ENCODE measurements at regions of chr1 and their contacts with region 1.

Region 1: DNA sequence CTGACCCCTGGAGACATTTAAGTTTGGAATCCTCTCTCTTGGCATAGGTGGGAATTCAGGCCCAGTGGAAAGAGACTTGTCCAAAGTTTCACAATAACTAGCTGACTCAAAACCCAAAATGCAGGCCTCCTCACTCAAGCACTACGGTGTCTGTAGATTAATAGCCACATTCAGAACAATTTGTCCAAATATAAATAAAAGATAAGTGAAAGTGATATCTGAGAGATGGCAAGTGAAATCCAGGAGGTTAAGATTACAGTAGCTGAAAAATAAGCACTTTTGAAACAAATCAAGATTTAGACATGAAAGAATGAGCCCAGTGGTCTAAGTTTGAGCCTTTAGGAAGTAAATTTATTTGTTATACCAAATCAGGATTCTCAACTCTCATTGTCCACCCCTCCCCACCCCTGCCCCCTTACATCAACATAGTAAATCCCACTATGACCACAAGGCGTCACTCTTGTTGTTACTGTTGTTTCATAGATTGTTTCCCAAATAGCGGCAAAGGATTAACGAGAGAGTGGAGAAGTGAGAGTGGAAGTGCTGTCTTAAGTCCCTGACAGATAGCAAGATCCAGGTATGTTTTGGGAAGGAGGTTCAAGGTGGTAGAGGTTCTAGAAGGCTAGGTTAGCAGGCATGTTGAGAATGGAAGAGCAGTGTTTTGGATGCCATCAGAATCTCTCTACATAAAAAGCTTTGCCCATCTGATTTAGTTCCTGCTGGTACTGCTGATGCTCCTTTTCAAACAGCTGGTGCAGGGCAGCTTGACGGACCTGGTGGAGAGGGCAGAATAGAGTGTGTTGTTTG is 7.1 kb upstream of the TPM3 start:
- DNase-seq: peak; percentile 77
- ATAC-seq: peak; percentile 76
- H3K4me3 ChIP-seq: no peak overlapping the region
- H3K4me3 Mint-ChIP-seq: no peak overlapping the region
- H3K27ac ChIP-seq: peak overlapping the region in 1 of 2 donors; percentile 28
- H3K27ac Mint-ChIP-seq: no peak overlapping the region
- H3K4me1 ChIP-seq: peaks cover 5 to 10% of the 10 kb centered on the region in 2 donors
- H3K4me1 Mint-ChIP-seq: no peaks in the 10 kb centered on the region
- H3K27me3 ChIP-seq: no peaks in the 10 kb centered on the region
- H3K27me3 Mint-ChIP-seq: peaks cover 4% of the 10 kb centered on the region
- CTCF ChIP-seq: peak; percentile 73

Region 2: GRCh38 chr1:154220071-154220969 is 21.4 kb after region 1 on chr1 and contains the start of gene UBAP2L:
- CTCF ChIA-PET with region 1: interaction called, 14 read pairs
- POLR2A ChIA-PET with region 1: interaction called, 12 read pairs
- intact Hi-C with region 1: no loop called
- DNase-seq: peak; percentile 100
- ATAC-seq: peak; percentile 83
- H3K4me3 ChIP-seq: peak within 1 kb of the TSS; percentile 92 to 99 (median 95)
- H3K4me3 Mint-ChIP-seq: peak within 1 kb of the TSS; percentile 97
- H3K27ac ChIP-seq: peak within 1 kb of the TSS; percentile 98 to 100
- H3K27ac Mint-ChIP-seq: peak within 1 kb of the TSS; percentile 97
- H3K4me1 ChIP-seq: peaks cover 34 to 39% of the 10 kb centered on the region in 2 donors
- H3K4me1 Mint-ChIP-seq: peaks cover 66% of the 10 kb centered on the region
- H3K27me3 ChIP-seq: no peaks in the 10 kb centered on the region
- H3K27me3 Mint-ChIP-seq: no peaks in the 10 kb centered on the region
- CTCF ChIP-seq: no peak
- total RNA-seq, gene UBAP2L: 218 and 219 TPM in 2 replicates

Measured in B cell (primary cell).